ENCODE measurements at regions of chr18 and their contacts with region 1.

Region 1: DNA sequence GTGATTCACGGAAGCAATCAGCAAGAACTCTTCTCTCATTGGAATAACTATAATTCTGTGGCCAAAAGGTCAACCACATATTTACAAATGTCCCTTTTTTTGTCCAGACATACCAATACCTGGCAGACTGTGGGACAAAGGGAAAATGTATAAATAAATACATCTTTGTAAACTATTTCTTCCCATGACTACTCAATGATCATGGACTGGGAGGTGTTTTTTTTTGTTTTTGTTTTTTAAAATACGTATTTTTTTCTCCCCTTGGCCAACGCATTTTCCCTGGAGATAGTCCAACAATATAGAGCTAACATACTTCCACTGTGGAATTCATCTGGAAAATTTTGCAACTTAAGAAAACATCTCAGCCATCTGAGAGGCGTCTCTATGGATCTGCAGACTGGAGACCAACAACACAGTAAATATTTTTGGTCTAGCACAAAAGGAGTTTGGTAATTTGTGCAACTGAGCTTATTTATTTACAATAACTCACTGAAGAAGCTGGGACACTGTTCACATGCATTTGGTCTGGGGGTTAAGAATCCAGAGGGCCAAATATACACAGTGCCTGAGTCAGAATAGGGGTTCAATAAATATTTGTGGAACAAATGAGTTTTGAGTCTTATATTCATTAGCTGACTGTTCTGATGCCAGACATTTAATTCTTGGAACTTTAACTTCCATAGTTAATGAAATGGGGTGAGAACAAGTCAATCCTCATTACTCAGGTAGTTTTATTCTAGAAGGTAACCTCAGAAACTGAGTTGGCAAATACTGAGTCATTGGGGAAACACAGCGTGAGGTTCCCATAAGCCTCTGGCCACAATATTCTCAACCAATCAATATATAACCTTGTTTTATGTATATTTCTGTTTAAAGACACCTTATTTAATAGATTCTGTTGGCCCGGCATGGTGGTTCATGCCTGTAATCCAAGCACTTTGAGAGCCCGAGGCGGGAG is 36.2 kb downstream of the CCBE1 start:
- DNase-seq: no peak
- H3K4me3 ChIP-seq: no peak overlapping the region
- H3K27ac ChIP-seq: no peak overlapping the region
- H3K4me1 ChIP-seq: no peaks in the 10 kb centered on the region
- H3K27me3 ChIP-seq: no peaks in the 10 kb centered on the region
- CTCF ChIP-seq: no peak
- POLR2A ChIP-seq: no peak

Region 2: DNA sequence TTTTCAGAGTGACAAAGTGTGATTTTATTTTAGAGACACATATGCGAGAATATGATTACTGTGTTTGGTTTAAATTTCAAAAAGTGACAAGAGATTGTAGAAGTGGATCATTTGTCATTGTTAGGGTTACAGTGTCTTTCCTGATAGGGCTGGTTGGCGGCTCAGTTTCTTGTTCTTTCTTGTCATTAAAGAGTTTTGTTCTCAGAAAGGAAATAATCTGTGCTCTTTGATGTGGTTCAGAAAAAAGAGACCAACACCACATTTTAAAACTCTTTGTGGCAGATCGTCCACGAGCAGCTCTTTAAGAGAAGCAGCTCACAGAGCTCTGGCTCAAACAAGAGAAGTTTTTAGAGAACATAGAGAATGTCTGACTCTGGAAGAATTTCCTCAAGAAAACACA is 842.0 kb before region 1 on chr18:
- intact Hi-C with region 1: loop called (anchors 10 kb)
- DNase-seq: no peak
- H3K4me3 ChIP-seq: no peak overlapping the region
- H3K27ac ChIP-seq: no peak overlapping the region
- H3K4me1 ChIP-seq: no peaks in the 10 kb centered on the region
- H3K27me3 ChIP-seq: no peaks in the 10 kb centered on the region
- CTCF ChIP-seq: no peak
- POLR2A ChIP-seq: no peak

Region 3: GRCh38 chr18:59715966-59716369 is 54.9 kb after region 1 on chr18:
- intact Hi-C with region 1: no loop called
- DNase-seq: no peak
- H3K4me3 ChIP-seq: no peak overlapping the region
- H3K27ac ChIP-seq: no peak overlapping the region
- H3K4me1 ChIP-seq: no peaks in the 10 kb centered on the region
- H3K27me3 ChIP-seq: no peaks in the 10 kb centered on the region
- CTCF ChIP-seq: no peak
- POLR2A ChIP-seq: no peak